Left cardiac atrium (tissue), 4 donors: ENCODE measurements at regions of chr11 and their contacts with region 1.

Region 1: GRCh38 chr11:14454861-14455632 is 44.6 kb downstream of the COPB1 start:
- DNase-seq: no peak
- ATAC-seq: peak; percentile 44 to 58

Region 2: GRCh38 chr11:14300661-14301304 is 154.3 kb before region 1 on chr11:
- intact Hi-C with region 1: loop called (anchors 2 to 5 kb)
- DNase-seq: peak; percentile 46
- ATAC-seq: peak; percentile 90 to 93

Region 3: GRCh38 chr11:14577292-14577691 is 122.2 kb after region 1 on chr11:
- intact Hi-C with region 1: no loop called
- DNase-seq: no peak
- ATAC-seq: no peak